Ovary (tissue), 10 donors: ENCODE measurements at regions of chr2 and their contacts with region 1.

Region 1: GRCh38 chr2:65186872-65187851 is 40.5 kb upstream of the ACTR2 start:
- DNase-seq: peak; percentile 69 to 85 (median 82)
- H3K4me3 ChIP-seq: no peak overlapping the region
- H3K27ac ChIP-seq: no peak overlapping the region
- H3K4me1 ChIP-seq: no peaks in the 10 kb centered on the region
- H3K27me3 ChIP-seq: no peaks in the 10 kb centered on the region
- CTCF ChIP-seq: peak; percentile 48 to 73 (median 63)
- EP300 ChIP-seq: no peak
- POLR2A ChIP-seq: no peak

Region 2: GRCh38 chr2:65064728-65065552 is 122.2 kb before region 1 on chr2:
- intact Hi-C with region 1: loop called in 3 of 4 experiments (anchors 5 to 10 kb)
- DNase-seq: peak; percentile 53 to 65 (median 58)
- H3K4me3 ChIP-seq: no peak overlapping the region
- H3K27ac ChIP-seq: peak overlapping the region in 1 of 2 donors; percentile 52
- H3K4me1 ChIP-seq: peaks cover 8% of the 10 kb centered on the region
- H3K27me3 ChIP-seq: no peaks in the 10 kb centered on the region
- CTCF ChIP-seq: peak; percentile 35 to 86 (median 62)
- EP300 ChIP-seq: no peak
- POLR2A ChIP-seq: no peak

Region 3: GRCh38 chr2:65070172-65070830 is 116.9 kb before region 1 on chr2:
- intact Hi-C with region 1: loop called in 3 of 4 experiments (anchors 5 to 10 kb)
- DNase-seq: no peak
- H3K4me3 ChIP-seq: no peak overlapping the region
- H3K27ac ChIP-seq: peak overlapping the region in 1 of 2 donors; percentile 4
- H3K4me1 ChIP-seq: peaks cover 1% of the 10 kb centered on the region
- H3K27me3 ChIP-seq: no peaks in the 10 kb centered on the region
- CTCF ChIP-seq: peak in 1 of 3 donors; percentile 12
- EP300 ChIP-seq: no peak
- POLR2A ChIP-seq: no peak

Region 4: DNA sequence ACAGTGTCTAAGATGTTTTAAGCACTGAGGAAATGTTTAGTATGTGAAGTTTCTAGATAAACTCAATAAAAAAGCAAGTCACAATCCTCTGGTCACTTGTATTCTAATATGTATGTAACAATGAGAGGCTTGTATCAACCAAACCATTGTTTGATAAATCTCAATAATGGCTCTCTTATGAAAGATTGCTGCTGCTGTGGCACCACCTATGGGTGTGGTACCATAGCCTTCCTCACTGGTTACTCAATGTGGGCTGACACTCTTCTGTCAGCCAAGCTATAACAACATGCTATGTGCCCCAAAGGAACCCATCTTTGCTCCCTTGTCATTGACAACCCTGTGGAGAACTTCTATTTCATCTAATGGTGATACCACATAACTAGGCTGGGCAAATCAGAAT is 44.6 kb before region 1 on chr2:
- intact Hi-C with region 1: no loop called
- DNase-seq: no peak
- H3K4me3 ChIP-seq: no peak overlapping the region
- H3K27ac ChIP-seq: no peak overlapping the region
- H3K4me1 ChIP-seq: peaks cover 3% of the 10 kb centered on the region
- H3K27me3 ChIP-seq: no peaks in the 10 kb centered on the region
- CTCF ChIP-seq: no peak
- EP300 ChIP-seq: no peak
- POLR2A ChIP-seq: no peak

Region 5: DNA sequence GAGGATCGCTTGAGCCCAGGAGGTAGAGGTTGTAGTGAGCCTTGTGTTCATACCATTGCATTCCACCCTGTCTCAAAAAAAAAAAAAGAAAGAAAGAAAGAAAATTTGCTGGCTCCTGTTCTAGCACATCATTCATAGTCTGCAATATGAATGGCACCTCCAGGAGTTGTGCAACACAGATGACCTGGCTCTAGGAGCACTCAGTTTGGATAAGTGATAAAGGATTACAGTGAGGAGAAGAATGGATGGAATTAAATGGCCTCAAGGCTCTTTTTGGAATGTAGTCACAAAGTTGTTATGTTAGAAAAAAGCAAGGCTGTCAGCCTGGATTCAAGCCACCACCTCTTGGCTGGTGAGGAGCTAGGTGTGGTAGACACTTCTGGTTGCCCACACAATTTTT is 266.8 kb after region 1 on chr2:
- intact Hi-C with region 1: no loop called
- DNase-seq: no peak
- H3K4me3 ChIP-seq: no peak overlapping the region
- H3K27ac ChIP-seq: no peak overlapping the region
- H3K4me1 ChIP-seq: no peaks in the 10 kb centered on the region
- H3K27me3 ChIP-seq: no peaks in the 10 kb centered on the region
- CTCF ChIP-seq: no peak
- EP300 ChIP-seq: no peak
- POLR2A ChIP-seq: no peak